A673 (cell line): ENCODE measurements at regions of chr18 and their contacts with region 1.

Region 1: DNA sequence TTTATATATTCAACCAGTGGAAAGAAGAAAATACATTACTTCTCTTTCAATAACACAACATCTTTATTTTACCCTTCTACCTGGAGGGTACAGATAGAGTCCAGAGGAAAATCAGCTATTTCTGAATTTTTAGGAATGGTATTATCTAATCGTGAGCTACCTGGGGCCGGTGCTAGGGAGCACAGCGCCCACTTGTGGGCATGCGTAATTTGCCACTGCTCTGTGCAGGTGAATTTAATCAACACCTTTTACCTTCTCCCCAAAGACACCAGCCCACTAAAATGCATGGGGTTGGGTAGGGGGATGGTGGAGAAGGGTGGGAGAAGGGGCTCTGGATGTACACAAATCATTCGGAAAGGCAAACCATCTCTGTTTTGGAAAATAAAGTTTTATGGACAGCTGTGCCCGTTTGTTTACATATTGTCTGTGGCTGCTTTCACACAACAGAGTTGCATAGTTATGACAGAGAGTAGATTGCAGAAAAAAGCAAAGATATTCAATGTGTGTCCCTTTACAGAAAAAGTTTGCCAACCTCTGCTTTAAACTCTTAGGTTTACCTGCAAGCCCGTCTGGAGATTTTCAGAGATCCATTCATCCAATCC is 51.5 kb upstream of the DCC start:
- DNase-seq: peak; percentile 23
- H3K4me3 ChIP-seq: no peak overlapping the region
- H3K27ac ChIP-seq: no peak overlapping the region
- H3K4me1 ChIP-seq: peaks cover 35% of the 10 kb centered on the region
- H3K27me3 ChIP-seq: no peaks in the 10 kb centered on the region
- CTCF ChIP-seq: peak; percentile 86

Region 2: GRCh38 chr18:51739044-51739666 is 549.3 kb before region 1 on chr18:
- CTCF ChIA-PET with region 1: no interaction called
- POLR2A ChIA-PET with region 1: no interaction called
- intact Hi-C with region 1: no loop called
- DNase-seq: no peak
- H3K4me3 ChIP-seq: no peak overlapping the region
- H3K27ac ChIP-seq: no peak overlapping the region
- H3K4me1 ChIP-seq: no peaks in the 10 kb centered on the region
- H3K27me3 ChIP-seq: no peaks in the 10 kb centered on the region
- CTCF ChIP-seq: no peak

Region 3: DNA sequence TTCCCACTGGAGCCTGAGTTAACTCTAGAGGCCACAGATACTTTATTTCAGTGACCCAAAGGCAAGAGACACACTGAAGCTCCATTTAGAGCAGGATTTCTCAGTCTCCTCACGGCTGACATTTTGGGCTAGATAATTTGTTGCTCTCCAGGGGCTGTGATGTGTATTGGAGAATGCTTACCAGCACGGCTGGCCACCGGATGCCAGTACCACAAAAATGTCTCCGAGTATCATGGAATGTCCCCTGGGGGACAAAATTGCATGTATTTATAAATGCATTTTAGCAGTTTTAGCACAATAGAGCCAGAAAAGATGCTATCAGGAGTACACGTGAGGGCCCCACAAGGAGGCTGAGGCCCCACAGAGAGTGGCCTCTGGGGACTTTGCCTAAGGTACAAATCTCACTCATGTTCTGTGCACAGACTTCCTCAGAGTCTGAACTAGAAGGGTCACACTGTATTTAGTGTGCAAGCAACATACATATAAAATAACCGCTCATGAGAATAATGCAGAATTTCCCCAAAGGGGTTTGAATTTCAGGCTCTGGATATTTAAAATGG is 31.0 kb after region 1 on chr18:
- CTCF ChIA-PET with region 1: no interaction called
- POLR2A ChIA-PET with region 1: no interaction called
- intact Hi-C with region 1: loop called (anchors 2 kb)
- DNase-seq: peak; percentile 92
- H3K4me3 ChIP-seq: no peak overlapping the region
- H3K27ac ChIP-seq: no peak overlapping the region
- H3K4me1 ChIP-seq: peaks cover 16% of the 10 kb centered on the region
- H3K27me3 ChIP-seq: no peaks in the 10 kb centered on the region
- CTCF ChIP-seq: no peak

Region 4: GRCh38 chr18:52370841-52371240 is 82.3 kb after region 1 on chr18:
- CTCF ChIA-PET with region 1: no interaction called
- POLR2A ChIA-PET with region 1: no interaction called
- intact Hi-C with region 1: no loop called
- DNase-seq: no peak
- H3K4me3 ChIP-seq: no peak overlapping the region
- H3K27ac ChIP-seq: no peak overlapping the region
- H3K4me1 ChIP-seq: peaks cover 55% of the 10 kb centered on the region
- H3K27me3 ChIP-seq: no peaks in the 10 kb centered on the region
- CTCF ChIP-seq: no peak